Dorsolateral prefrontal cortex (tissue), 120 donors: ENCODE measurements at regions of chr2 and their contacts with region 1.

Region 1: GRCh38 chr2:95076784-95077529 is 44.7 kb downstream of the MRPS5 start:
- DNase-seq: peak; percentile 71 to 90 (median 88)
- H3K4me3 ChIP-seq: peak overlapping the region; percentile 33 to 80 (median 61)
- H3K27ac ChIP-seq: peak overlapping the region in 55 of 59 donors; percentile 0 to 98 (median 88)
- H3K27me3 ChIP-seq: peaks cover 0 to 18% (median 0%) of the 10 kb centered on the region in 45 donors
- CTCF ChIP-seq: peak; percentile 76 to 97 (median 89)

Region 2: GRCh38 chr2:95008306-95008705 is 68.7 kb before region 1 on chr2:
- intact Hi-C with region 1: no loop called
- DNase-seq: peak in 1 of 10 donors; percentile 37
- H3K4me3 ChIP-seq: no peak overlapping the region
- H3K27ac ChIP-seq: peak overlapping the region in 38 of 59 donors; percentile 2 to 83 (median 62)
- H3K27me3 ChIP-seq: peaks cover 0 to 5% (median 0%) of the 10 kb centered on the region in 45 donors
- CTCF ChIP-seq: no peak

Region 3: DNA sequence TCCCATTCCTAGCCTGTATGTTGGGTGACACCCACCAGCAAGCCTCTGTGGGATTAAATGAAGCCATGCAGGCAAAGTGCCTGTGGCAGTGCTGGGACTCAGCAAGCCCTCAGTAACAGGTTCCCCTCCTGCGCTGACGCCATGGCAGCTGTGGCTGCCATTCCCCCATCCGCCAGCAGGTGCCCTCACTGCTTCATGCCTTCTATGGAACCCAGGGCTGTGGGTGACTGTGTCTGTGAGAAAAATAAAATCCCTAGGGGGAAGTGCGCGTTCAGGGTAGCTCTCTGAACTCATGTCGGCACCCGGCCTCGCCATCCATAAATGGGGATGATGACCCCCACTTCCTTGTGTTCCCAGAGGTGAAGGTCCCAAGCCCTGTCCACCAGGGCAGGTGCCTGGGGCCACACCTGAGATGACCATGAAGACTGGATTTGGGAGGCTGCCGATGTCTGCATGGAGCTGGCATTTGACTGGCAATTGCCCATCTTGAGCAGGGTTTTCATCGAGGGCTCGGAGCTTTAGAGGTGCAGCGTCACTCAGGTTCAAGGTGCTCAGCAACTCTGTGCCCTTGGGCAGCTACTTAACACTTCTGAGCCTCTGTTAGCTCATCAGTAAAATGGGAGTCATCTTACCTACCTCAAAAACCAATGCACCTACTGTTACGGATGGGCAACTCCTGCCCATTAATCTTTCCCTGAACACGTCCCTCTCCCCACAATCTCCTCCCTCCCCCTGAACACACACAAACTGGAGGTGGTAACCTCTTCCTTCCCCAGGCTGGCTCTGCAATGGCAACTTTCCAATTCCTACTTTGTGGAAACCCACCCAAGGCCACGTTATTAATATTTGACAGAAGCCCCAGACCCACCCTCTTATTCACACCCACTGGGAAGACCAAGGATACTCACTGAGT is 54.4 kb before region 1 on chr2:
- intact Hi-C with region 1: loop called (anchors 1 to 2 kb)
- DNase-seq: peak; percentile 36 to 91 (median 88)
- H3K4me3 ChIP-seq: peak overlapping the region in 4 of 59 donors; percentile 0 to 83 (median 30)
- H3K27ac ChIP-seq: peak overlapping the region; percentile 65 to 100 (median 96)
- H3K27me3 ChIP-seq: peaks cover 0 to 36% (median 6%) of the 10 kb centered on the region in 45 donors
- CTCF ChIP-seq: peak; percentile 77 to 99 (median 96)